Activated CD4-positive, alpha-beta memory T cell treated with anti-CD3 and anti-CD28 coated beads for 36 hours (primary cell): ENCODE measurements at regions of chr2 and their contacts with region 1.

Region 1: GRCh38 chr2:112941753-112942658 is 31.0 kb downstream of the IL37 start:
- DNase-seq: peak; percentile 85
- H3K4me3 Mint-ChIP-seq: no peak overlapping the region
- H3K27ac Mint-ChIP-seq: no peak overlapping the region
- H3K4me1 Mint-ChIP-seq: no peaks in the 10 kb centered on the region
- H3K27me3 Mint-ChIP-seq: no peaks in the 10 kb centered on the region

Region 2: DNA sequence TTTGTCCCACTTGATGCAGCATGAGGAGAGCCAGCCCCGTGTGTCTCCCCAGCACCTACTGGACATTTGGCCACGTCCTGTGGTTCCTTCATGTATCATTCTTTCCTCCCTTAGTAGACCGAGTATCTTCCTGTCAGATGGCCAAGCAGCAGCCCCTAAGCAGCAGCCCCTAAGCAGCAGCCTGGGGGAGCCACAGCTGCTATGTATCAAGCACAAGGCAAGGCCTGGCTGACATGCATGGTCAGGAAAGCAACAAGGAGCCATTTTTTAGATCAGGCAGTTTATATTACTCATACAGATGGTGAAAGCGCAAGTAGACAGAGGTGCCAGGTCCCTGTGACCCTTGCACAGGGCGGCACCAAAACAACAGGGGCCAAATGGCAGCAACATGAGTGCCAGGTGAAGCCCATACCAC is 335.5 kb before region 1 on chr2:
- CTCF ChIA-PET with region 1: no interaction called
- POLR2A ChIA-PET with region 1: no interaction called
- intact Hi-C with region 1: loop called (anchors 5 kb)
- DNase-seq: no peak
- H3K4me3 Mint-ChIP-seq: no peak overlapping the region
- H3K27ac Mint-ChIP-seq: no peak overlapping the region
- H3K4me1 Mint-ChIP-seq: no peaks in the 10 kb centered on the region
- H3K27me3 Mint-ChIP-seq: no peaks in the 10 kb centered on the region

Region 3: GRCh38 chr2:112737542-112738232 is 204.3 kb before region 1 on chr2:
- CTCF ChIA-PET with region 1: interaction called, 12 read pairs
- POLR2A ChIA-PET with region 1: no interaction called
- intact Hi-C with region 1: no loop called
- DNase-seq: no peak
- H3K4me3 Mint-ChIP-seq: no peak overlapping the region
- H3K27ac Mint-ChIP-seq: no peak overlapping the region
- H3K4me1 Mint-ChIP-seq: peaks cover 7% of the 10 kb centered on the region
- H3K27me3 Mint-ChIP-seq: no peaks in the 10 kb centered on the region

Region 4: GRCh38 chr2:112884869-112885505 is 57.0 kb before region 1 on chr2:
- CTCF ChIA-PET with region 1: interaction called, 71 read pairs
- POLR2A ChIA-PET with region 1: no interaction called
- intact Hi-C with region 1: loop called (anchors 2 kb)
- DNase-seq: peak; percentile 86
- H3K4me3 Mint-ChIP-seq: no peak overlapping the region
- H3K27ac Mint-ChIP-seq: peak overlapping the region; percentile 6
- H3K4me1 Mint-ChIP-seq: peaks cover 27% of the 10 kb centered on the region
- H3K27me3 Mint-ChIP-seq: no peaks in the 10 kb centered on the region

Region 5: GRCh38 chr2:112893757-112894156 is 48.2 kb before region 1 on chr2:
- CTCF ChIA-PET with region 1: interaction called, 13 read pairs
- POLR2A ChIA-PET with region 1: no interaction called
- intact Hi-C with region 1: no loop called
- DNase-seq: no peak
- H3K4me3 Mint-ChIP-seq: no peak overlapping the region
- H3K27ac Mint-ChIP-seq: no peak overlapping the region
- H3K4me1 Mint-ChIP-seq: no peaks in the 10 kb centered on the region
- H3K27me3 Mint-ChIP-seq: peaks cover 9% of the 10 kb centered on the region

Region 6: DNA sequence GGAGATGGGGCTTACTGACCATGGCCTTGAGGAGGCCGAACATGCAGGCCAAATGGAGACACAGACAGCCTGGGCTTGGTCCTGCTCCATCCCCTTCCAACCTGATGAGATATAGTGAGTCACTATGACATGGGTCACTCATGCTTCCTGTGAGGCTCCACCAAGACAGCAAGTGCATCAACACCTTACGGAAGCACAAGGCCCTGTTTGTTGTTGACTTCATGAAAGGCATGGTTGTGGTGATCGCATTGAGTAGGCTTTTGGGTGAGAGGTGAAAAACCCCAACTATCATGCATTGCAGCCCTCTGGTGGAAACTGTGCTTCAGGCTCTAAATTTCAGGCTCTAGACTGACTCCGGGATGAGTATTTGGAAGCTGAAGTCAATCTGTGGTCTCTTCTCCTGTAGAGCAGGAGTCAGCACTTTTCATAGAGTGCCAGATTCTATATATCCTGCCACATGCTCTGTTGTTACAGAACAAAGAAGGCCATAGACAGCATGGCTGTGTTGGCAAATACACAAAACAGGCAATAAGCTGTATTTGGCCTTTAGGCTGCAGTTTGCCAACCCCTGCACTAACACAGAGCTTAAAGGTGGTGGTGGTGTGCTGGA is 21.0 kb before region 1 on chr2:
- CTCF ChIA-PET with region 1: interaction called, 50 read pairs
- POLR2A ChIA-PET with region 1: interaction called, 3 read pairs
- intact Hi-C with region 1: no loop called
- DNase-seq: peak; percentile 54
- H3K4me3 Mint-ChIP-seq: no peak overlapping the region
- H3K27ac Mint-ChIP-seq: peak overlapping the region; percentile 20
- H3K4me1 Mint-ChIP-seq: peaks cover 20% of the 10 kb centered on the region
- H3K27me3 Mint-ChIP-seq: peaks cover 3% of the 10 kb centered on the region

Region 7: GRCh38 chr2:112958428-112959108 is 16.6 kb after region 1 on chr2:
- CTCF ChIA-PET with region 1: interaction called, 17 read pairs
- POLR2A ChIA-PET with region 1: no interaction called
- intact Hi-C with region 1: no loop called
- DNase-seq: peak; percentile 37
- H3K4me3 Mint-ChIP-seq: no peak overlapping the region
- H3K27ac Mint-ChIP-seq: no peak overlapping the region
- H3K4me1 Mint-ChIP-seq: no peaks in the 10 kb centered on the region
- H3K27me3 Mint-ChIP-seq: no peaks in the 10 kb centered on the region